Pancreas (tissue), 10 donors: ENCODE measurements at regions of chr2 and their contacts with region 1.

Region 1: GRCh38 chr2:166127217-166128155 is at the start of gene SCN1A:
- DNase-seq: peak in 1 of 6 donors; percentile 15
- ATAC-seq: peak; percentile 48 to 83 (median 70)
- H3K4me3 ChIP-seq: no peak within 1 kb of the TSS
- H3K27ac ChIP-seq: no peak within 1 kb of the TSS
- H3K4me1 ChIP-seq: no peaks in the 10 kb centered on the region
- H3K27me3 ChIP-seq: no peaks in the 10 kb centered on the region
- CTCF ChIP-seq: peak; percentile 37 to 66 (median 40)
- total RNA-seq, gene SCN1A: 0.03 to 0.43 (median 0.04) TPM in 4 of 6 donors, not detected in the others

Region 2: GRCh38 chr2:165293440-165294353 is 833.8 kb before region 1 on chr2:
- intact Hi-C with region 1: no loop called
- DNase-seq: peak in 3 of 6 donors; percentile 60 to 66 (median 65)
- ATAC-seq: peak; percentile 98 to 100 (median 100)
- H3K4me3 ChIP-seq: peak overlapping the region in 1 of 4 donors; percentile 22
- H3K27ac ChIP-seq: no peak overlapping the region
- H3K4me1 ChIP-seq: peaks cover 0 to 4% (median 3%) of the 10 kb centered on the region in 3 donors
- H3K27me3 ChIP-seq: no peaks in the 10 kb centered on the region
- CTCF ChIP-seq: peak; percentile 44 to 74 (median 51)

Region 3: GRCh38 chr2:165953655-165954606 is 173.6 kb before region 1 on chr2 and contains the start of gene TTC21B:
- intact Hi-C with region 1: loop called in 2 of 3 experiments (anchors 10 kb)
- DNase-seq: peak; percentile 95 to 97 (median 96)
- ATAC-seq: peak; percentile 97 to 99 (median 98)
- H3K4me3 ChIP-seq: peak within 1 kb of the TSS; percentile 42 to 70 (median 58)
- H3K27ac ChIP-seq: peak within 1 kb of the TSS; percentile 80 to 92 (median 86)
- H3K4me1 ChIP-seq: peaks cover 0 to 26% (median 12%) of the 10 kb centered on the region in 3 donors
- H3K27me3 ChIP-seq: no peaks in the 10 kb centered on the region
- CTCF ChIP-seq: peak; percentile 62 to 86 (median 73)
- total RNA-seq, gene TTC21B: 5.4 to 14.7 (median 9.2) TPM

Region 4: DNA sequence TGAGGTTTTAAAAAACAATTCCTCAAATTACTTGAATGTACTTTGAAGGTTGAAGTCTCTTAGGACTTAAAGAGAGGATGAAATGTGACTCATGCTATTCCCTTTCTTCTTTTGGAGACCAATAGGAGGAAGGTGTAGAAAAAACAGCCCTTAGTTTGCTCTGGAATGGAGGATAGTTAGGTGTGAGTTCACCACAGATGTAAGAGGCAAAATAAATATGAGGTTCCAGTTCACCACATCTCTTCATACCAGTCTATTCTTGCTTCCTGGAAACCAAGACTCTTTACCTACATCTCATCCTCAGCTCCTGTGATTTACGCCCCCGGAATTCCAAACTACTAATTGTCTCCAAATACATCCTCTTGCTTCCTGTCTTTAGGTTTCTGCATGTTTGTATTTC is 96.4 kb before region 1 on chr2:
- intact Hi-C with region 1: no loop called
- DNase-seq: no peak
- ATAC-seq: no peak
- H3K4me3 ChIP-seq: no peak overlapping the region
- H3K27ac ChIP-seq: no peak overlapping the region
- H3K4me1 ChIP-seq: no peaks in the 10 kb centered on the region
- H3K27me3 ChIP-seq: no peaks in the 10 kb centered on the region
- CTCF ChIP-seq: no peak

Region 5: DNA sequence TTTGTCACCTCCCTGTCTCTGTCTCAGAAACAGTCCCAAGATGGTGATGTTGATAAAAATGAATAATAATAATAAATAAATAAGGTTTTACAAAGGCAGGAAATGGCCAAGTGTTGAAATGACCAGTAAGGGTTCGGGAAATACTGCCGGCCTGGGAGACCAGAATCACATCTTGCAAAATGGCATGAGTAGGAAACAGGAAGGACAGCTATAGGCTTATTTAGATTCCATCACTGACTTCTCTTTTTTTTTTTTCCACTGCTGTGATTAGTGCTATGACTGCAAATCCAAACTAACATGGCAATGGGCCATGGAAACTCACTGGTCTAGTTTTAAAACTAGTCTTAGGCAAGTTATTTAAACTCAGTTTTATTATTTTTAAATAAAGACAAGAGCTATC is 60.3 kb before region 1 on chr2:
- intact Hi-C with region 1: loop called in 1 of 3 experiments (anchors 10 kb)
- DNase-seq: no peak
- ATAC-seq: peak in 1 of 4 donors; percentile 20
- H3K4me3 ChIP-seq: no peak overlapping the region
- H3K27ac ChIP-seq: no peak overlapping the region
- H3K4me1 ChIP-seq: no peaks in the 10 kb centered on the region
- H3K27me3 ChIP-seq: no peaks in the 10 kb centered on the region
- CTCF ChIP-seq: no peak